ENCODE measurements at regions of chr4 and their contacts with region 1.

Region 1: DNA sequence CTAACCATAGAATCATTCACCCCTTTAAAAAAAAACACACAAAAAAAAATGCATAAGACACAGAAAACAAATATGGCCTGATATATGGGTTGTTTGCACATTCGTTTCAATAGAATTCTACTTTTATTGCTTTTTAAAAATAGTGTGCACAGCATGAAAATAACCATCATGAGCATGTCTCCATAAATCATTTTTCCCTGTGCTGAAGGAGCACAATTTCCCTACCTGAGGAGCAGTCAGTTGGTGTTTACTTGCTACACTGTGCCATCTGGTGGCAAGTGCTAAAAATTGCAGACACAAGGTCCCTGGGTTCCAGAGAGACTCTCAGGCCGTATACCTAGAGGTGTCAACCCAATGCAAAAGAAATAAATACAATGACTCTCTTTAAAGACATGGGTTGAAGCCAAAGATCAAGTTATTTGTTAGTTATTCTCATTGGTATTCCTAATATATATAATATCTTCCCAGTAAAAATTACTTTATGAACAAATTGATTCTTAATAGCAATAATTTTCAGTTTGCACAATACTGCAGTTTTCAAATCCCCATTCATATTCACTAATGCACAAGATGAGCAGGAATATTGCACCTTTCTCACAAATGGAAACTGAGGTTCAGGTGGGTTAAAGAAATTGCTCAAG is 551.4 kb downstream of the IQCM start:
- DNase-seq: peak; percentile 22
- ATAC-seq: no peak
- H3K4me3 ChIP-seq: no peak overlapping the region
- H3K4me3 Mint-ChIP-seq: no peak overlapping the region
- H3K27ac ChIP-seq: no peak overlapping the region
- H3K27ac Mint-ChIP-seq: no peak overlapping the region
- H3K4me1 ChIP-seq: no peaks in the 10 kb centered on the region
- H3K4me1 Mint-ChIP-seq: no peaks in the 10 kb centered on the region
- H3K27me3 ChIP-seq: no peaks in the 10 kb centered on the region
- H3K27me3 Mint-ChIP-seq: no peaks in the 10 kb centered on the region
- CTCF ChIP-seq: peak; percentile 62

Region 2: GRCh38 chr4:148056869-148057268 is 1207.3 kb before region 1 on chr4:
- CTCF ChIA-PET with region 1: interaction called, 5 read pairs
- POLR2A ChIA-PET with region 1: no interaction called
- intact Hi-C with region 1: loop called (anchors 1 kb)
- DNase-seq: peak; percentile 86
- ATAC-seq: peak; percentile 89
- H3K4me3 ChIP-seq: peak overlapping the region in 1 of 5 experiments; percentile 18
- H3K4me3 Mint-ChIP-seq: peak overlapping the region; percentile 17
- H3K27ac ChIP-seq: no peak overlapping the region
- H3K27ac Mint-ChIP-seq: no peak overlapping the region
- H3K4me1 ChIP-seq: peaks cover 31 to 33% of the 10 kb centered on the region in 2 donors
- H3K4me1 Mint-ChIP-seq: peaks cover 39% of the 10 kb centered on the region
- H3K27me3 ChIP-seq: no peaks in the 10 kb centered on the region
- H3K27me3 Mint-ChIP-seq: no peaks in the 10 kb centered on the region
- CTCF ChIP-seq: peak; percentile 76

Region 3: DNA sequence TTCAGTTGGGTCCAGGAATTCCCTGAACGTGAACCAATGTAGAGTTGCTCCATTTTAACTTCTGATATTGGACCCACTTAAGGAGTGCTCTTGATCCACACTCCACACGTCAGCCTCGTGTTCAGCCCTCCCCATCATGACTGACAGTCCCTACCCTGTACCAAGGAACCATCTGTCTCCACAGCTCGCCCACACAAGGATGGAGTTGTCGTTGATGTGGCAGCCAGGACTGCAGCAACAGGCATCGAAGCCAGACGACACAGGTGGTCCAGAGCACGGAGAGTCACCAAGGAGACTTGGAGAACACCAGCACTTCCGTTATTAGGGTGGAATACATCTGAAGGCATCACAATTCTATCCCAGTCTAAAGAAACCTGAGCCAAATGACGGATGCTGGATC is 349.9 kb before region 1 on chr4:
- CTCF ChIA-PET with region 1: no interaction called
- POLR2A ChIA-PET with region 1: no interaction called
- intact Hi-C with region 1: no loop called
- DNase-seq: no peak
- ATAC-seq: no peak
- H3K4me3 ChIP-seq: no peak overlapping the region
- H3K4me3 Mint-ChIP-seq: no peak overlapping the region
- H3K27ac ChIP-seq: no peak overlapping the region
- H3K27ac Mint-ChIP-seq: no peak overlapping the region
- H3K4me1 ChIP-seq: no peaks in the 10 kb centered on the region
- H3K4me1 Mint-ChIP-seq: no peaks in the 10 kb centered on the region
- H3K27me3 ChIP-seq: no peaks in the 10 kb centered on the region
- H3K27me3 Mint-ChIP-seq: no peaks in the 10 kb centered on the region
- CTCF ChIP-seq: no peak

Region 4: GRCh38 chr4:149279776-149280175 is 15.6 kb after region 1 on chr4:
- CTCF ChIA-PET with region 1: no interaction called
- POLR2A ChIA-PET with region 1: no interaction called
- intact Hi-C with region 1: no loop called
- DNase-seq: no peak
- ATAC-seq: no peak
- H3K4me3 ChIP-seq: no peak overlapping the region
- H3K4me3 Mint-ChIP-seq: no peak overlapping the region
- H3K27ac ChIP-seq: no peak overlapping the region
- H3K27ac Mint-ChIP-seq: no peak overlapping the region
- H3K4me1 ChIP-seq: no peaks in the 10 kb centered on the region
- H3K4me1 Mint-ChIP-seq: no peaks in the 10 kb centered on the region
- H3K27me3 ChIP-seq: no peaks in the 10 kb centered on the region
- H3K27me3 Mint-ChIP-seq: no peaks in the 10 kb centered on the region
- CTCF ChIP-seq: no peak

Region 5: GRCh38 chr4:150297861-150298474 is 1033.8 kb after region 1 on chr4:
- CTCF ChIA-PET with region 1: no interaction called
- POLR2A ChIA-PET with region 1: no interaction called
- intact Hi-C with region 1: no loop called
- DNase-seq: peak; percentile 26
- ATAC-seq: no peak
- H3K4me3 ChIP-seq: no peak overlapping the region
- H3K4me3 Mint-ChIP-seq: no peak overlapping the region
- H3K27ac ChIP-seq: no peak overlapping the region
- H3K27ac Mint-ChIP-seq: no peak overlapping the region
- H3K4me1 ChIP-seq: no peaks in the 10 kb centered on the region
- H3K4me1 Mint-ChIP-seq: no peaks in the 10 kb centered on the region
- H3K27me3 ChIP-seq: no peaks in the 10 kb centered on the region
- H3K27me3 Mint-ChIP-seq: no peaks in the 10 kb centered on the region
- CTCF ChIP-seq: peak; percentile 60

Measured in B cell (primary cell).